Heart right ventricle (tissue), 16 donors: ENCODE measurements at regions of chr2 and their contacts with region 1.

Region 1: GRCh38 chr2:190088917-190089316 is 26.4 kb upstream of the MSTN start:
- DNase-seq: peak in 1 of 2 donors; percentile 48
- ATAC-seq: peak in 7 of 8 donors; percentile 51 to 79 (median 68)
- H3K4me3 ChIP-seq: no peak overlapping the region
- H3K27ac ChIP-seq: no peak overlapping the region
- H3K4me1 ChIP-seq: peaks cover 0 to 3% (median 0%) of the 10 kb centered on the region in 9 donors
- H3K27me3 ChIP-seq: no peaks in the 10 kb centered on the region
- CTCF ChIP-seq: peak; percentile 47 to 87 (median 76)

Region 2: DNA sequence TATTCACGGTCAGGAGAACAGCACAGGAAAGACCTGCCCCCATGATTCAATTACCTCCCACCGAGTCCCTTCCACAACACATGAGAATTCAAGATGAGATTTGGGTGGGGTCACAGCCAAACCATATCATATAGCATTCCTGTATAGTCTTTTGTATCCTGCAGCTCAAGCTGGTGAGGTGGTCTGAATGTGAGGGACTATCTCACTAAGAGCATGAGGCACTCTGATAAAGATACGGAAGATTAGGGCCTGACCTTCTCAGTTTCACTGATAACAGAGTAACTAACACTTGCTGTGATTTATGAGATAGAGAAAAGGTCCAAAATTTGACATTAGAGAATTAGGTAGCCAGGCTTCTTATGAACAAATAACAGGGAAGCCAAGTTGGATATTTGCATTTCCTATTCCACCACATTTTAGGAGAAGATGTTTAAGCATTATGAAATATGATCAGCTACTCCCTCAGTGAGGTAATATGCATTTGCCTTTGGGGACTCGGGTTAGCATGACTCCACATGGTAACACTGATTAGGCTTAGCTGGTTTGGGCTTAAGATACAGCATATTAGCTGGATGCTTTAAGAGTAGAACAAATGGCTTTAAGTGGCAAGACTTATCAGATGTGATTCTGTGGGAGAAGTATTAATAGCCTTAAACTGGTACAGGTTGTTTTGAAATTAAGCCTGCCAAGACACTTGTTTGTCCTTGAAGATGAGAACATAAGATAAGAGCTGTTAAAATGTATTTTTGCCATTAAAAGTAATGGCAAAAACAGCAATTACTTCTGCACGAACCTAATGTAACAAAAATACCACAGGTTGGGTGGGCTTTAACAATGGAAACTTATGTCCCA is 80.5 kb after region 1 on chr2:
- intact Hi-C with region 1: no loop called
- DNase-seq: no peak
- ATAC-seq: peak in 1 of 8 donors; percentile 49
- H3K4me3 ChIP-seq: no peak overlapping the region
- H3K27ac ChIP-seq: no peak overlapping the region
- H3K4me1 ChIP-seq: no peaks in the 10 kb centered on the region
- H3K27me3 ChIP-seq: no peaks in the 10 kb centered on the region
- CTCF ChIP-seq: no peak

Region 3: GRCh38 chr2:190277234-190278112 is 188.6 kb after region 1 on chr2:
- intact Hi-C with region 1: loop called (anchors 1 to 10 kb)
- DNase-seq: no peak
- ATAC-seq: no peak
- H3K4me3 ChIP-seq: no peak overlapping the region
- H3K27ac ChIP-seq: no peak overlapping the region
- H3K4me1 ChIP-seq: no peaks in the 10 kb centered on the region
- H3K27me3 ChIP-seq: no peaks in the 10 kb centered on the region
- CTCF ChIP-seq: peak; percentile 16 to 73 (median 63)

Region 4: DNA sequence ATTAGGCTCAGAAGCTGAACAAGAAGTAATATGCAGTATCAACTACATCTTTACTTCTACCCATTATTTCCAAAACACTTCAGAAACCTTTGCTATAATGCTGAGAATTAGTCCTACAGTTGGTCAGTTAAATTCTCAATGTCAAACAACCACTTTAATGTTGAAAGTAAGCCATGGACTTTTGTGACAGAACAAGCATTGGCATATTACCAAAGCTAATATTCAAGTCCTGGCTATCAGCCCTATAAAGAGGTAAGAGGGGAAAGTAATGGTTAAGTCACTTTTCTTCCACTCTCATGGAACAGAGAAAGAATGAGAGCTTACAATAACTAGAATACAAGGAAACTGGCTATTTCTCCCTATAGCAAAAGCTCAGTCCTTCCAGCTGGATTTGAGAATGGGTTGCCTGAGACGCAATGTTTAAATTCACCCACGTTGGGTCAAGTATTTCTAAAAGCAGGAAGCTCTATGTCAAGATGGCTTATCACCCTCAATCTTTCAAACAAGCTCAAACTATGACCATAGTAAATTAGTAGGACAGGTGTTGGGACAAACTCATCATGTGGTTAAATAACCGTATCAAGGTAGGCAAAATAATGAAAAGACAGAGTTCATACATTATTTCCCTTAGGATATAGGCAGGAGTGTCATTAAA is 287.8 kb after region 1 on chr2:
- intact Hi-C with region 1: loop called in 8 of 10 experiments (anchors 2 to 10 kb)
- DNase-seq: no peak
- ATAC-seq: no peak
- H3K4me3 ChIP-seq: no peak overlapping the region
- H3K27ac ChIP-seq: no peak overlapping the region
- H3K4me1 ChIP-seq: peaks cover 0 to 11% (median 0%) of the 10 kb centered on the region in 9 donors
- H3K27me3 ChIP-seq: no peaks in the 10 kb centered on the region
- CTCF ChIP-seq: no peak

Region 5: DNA sequence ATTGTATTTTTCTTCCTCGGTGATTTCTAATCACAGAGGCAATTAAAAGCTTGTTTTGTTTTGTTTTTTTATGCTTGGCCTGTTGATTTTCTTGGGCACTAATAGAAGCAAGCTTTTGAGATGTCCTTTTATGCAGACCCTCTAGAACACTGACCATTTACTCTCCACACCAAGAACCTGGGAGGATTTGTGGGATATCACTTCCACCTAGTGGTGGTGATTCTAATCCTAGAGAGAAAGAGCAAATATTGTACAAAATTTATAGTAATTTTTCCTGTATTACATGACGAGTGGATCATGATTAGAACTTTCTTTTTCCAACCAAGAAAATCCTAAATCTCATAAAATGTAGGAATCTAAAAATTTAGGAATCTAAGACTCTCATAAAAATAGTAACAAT is 422.2 kb after region 1 on chr2:
- intact Hi-C with region 1: loop called in 4 of 10 experiments (anchors 2 to 10 kb)
- DNase-seq: no peak
- ATAC-seq: peak in 2 of 8 donors; percentile 55 to 70
- H3K4me3 ChIP-seq: no peak overlapping the region
- H3K27ac ChIP-seq: no peak overlapping the region
- H3K4me1 ChIP-seq: peaks cover 0 to 23% (median 0%) of the 10 kb centered on the region in 9 donors
- H3K27me3 ChIP-seq: no peaks in the 10 kb centered on the region
- CTCF ChIP-seq: peak in 8 of 9 donors; percentile 38 to 74 (median 62)

Region 6: GRCh38 chr2:190804182-190804795 is 715.4 kb after region 1 on chr2:
- intact Hi-C with region 1: loop called in 2 of 10 experiments (anchors 5 to 10 kb)
- DNase-seq: no peak
- ATAC-seq: peak in 1 of 8 donors; percentile 38
- H3K4me3 ChIP-seq: no peak overlapping the region
- H3K27ac ChIP-seq: no peak overlapping the region
- H3K4me1 ChIP-seq: peaks cover 0 to 7% (median 0%) of the 10 kb centered on the region in 9 donors
- H3K27me3 ChIP-seq: no peaks in the 10 kb centered on the region
- CTCF ChIP-seq: peak; percentile 35 to 82 (median 69)